IMR-90 (cell line): ENCODE measurements at regions of chr4 and their contacts with region 1.

Region 1: GRCh38 chr4:123661080-123661737 is 264.6 kb downstream of the SPRY1 start:
- DNase-seq: peak; percentile 33
- ATAC-seq: peak; percentile 48; the same call in 1 of the 2 replicates
- H3K4me3 ChIP-seq: no peak overlapping the region
- H3K27ac ChIP-seq: no peak overlapping the region
- H3K4me1 ChIP-seq: no peaks in the 10 kb centered on the region
- H3K27me3 ChIP-seq: no peaks in the 10 kb centered on the region
- CTCF ChIP-seq: peak; percentile 64
- POLR2A ChIP-seq: no peak
- RAD21 ChIP-seq: peak; percentile 69

Region 2: DNA sequence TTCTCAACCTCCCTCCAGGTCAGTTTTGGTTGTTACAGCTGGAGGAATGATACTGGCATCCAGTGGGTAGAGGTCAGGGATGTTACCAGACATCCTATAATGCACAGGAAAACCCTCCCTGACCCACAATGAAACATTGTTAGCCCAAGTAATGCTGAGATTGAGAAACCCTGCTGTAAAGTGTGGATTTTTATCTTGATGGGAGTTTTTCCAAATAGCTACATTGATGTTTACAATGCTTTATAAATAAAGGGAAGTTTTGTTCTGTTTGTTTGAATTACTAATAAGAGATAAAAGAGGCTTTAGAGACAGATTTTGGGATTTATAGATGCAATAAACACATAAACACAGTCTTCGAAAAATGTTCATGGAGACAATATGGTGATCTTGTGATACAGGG is 544.8 kb before region 1 on chr4:
- CTCF ChIA-PET with region 1: no interaction called
- POLR2A ChIA-PET with region 1: no interaction called
- dilution Hi-C with region 1: no loop called
- in situ Hi-C with region 1: loop called (anchors 10 kb)
- intact Hi-C with region 1: no loop called
- DNase-seq: peak; percentile 47
- ATAC-seq: peak; percentile 30
- H3K4me3 ChIP-seq: no peak overlapping the region
- H3K27ac ChIP-seq: no peak overlapping the region
- H3K4me1 ChIP-seq: peaks cover 7% of the 10 kb centered on the region
- H3K27me3 ChIP-seq: no peaks in the 10 kb centered on the region
- CTCF ChIP-seq: no peak
- POLR2A ChIP-seq: no peak
- RAD21 ChIP-seq: no peak

Region 3: GRCh38 chr4:123127218-123127617 is 534.0 kb before region 1 on chr4:
- CTCF ChIA-PET with region 1: interaction called, 8 read pairs
- POLR2A ChIA-PET with region 1: no interaction called
- dilution Hi-C with region 1: no loop called
- in situ Hi-C with region 1: no loop called
- intact Hi-C with region 1: loop called (anchors 2 kb)
- DNase-seq: peak; percentile 42
- ATAC-seq: peak; percentile 83
- H3K4me3 ChIP-seq: no peak overlapping the region
- H3K27ac ChIP-seq: no peak overlapping the region
- H3K4me1 ChIP-seq: no peaks in the 10 kb centered on the region
- H3K27me3 ChIP-seq: no peaks in the 10 kb centered on the region
- CTCF ChIP-seq: peak; percentile 56
- POLR2A ChIP-seq: no peak
- RAD21 ChIP-seq: peak; percentile 61

Region 4: DNA sequence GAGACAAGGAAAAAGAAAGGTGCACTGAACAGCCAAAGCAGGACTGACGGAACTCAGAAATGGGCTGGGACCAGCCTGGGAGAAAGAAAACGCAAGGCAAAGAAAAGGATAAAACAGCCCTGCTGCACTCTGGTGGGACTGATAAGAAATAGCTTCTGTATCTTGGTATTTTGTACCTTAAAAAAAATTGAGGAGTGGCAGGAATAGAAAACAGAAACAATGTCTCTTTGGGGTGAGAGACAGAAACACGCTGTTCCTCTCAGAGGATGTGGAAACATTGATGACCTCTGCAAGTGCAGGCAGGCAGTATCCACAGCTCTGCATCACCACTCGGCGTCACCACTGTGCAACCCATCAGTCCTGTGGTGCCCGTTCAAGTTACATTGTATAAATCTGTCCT is 417.1 kb before region 1 on chr4:
- CTCF ChIA-PET with region 1: no interaction called
- POLR2A ChIA-PET with region 1: no interaction called
- dilution Hi-C with region 1: no loop called
- in situ Hi-C with region 1: no loop called
- intact Hi-C with region 1: loop called (anchors 10 kb)
- DNase-seq: peak; percentile 65
- ATAC-seq: peak; percentile 93
- H3K4me3 ChIP-seq: no peak overlapping the region
- H3K27ac ChIP-seq: no peak overlapping the region
- H3K4me1 ChIP-seq: no peaks in the 10 kb centered on the region; the same call in 1 of the 2 replicates
- H3K27me3 ChIP-seq: no peaks in the 10 kb centered on the region
- CTCF ChIP-seq: peak; percentile 18; the same call in 1 of the 2 replicates
- POLR2A ChIP-seq: no peak
- RAD21 ChIP-seq: no peak

Region 5: DNA sequence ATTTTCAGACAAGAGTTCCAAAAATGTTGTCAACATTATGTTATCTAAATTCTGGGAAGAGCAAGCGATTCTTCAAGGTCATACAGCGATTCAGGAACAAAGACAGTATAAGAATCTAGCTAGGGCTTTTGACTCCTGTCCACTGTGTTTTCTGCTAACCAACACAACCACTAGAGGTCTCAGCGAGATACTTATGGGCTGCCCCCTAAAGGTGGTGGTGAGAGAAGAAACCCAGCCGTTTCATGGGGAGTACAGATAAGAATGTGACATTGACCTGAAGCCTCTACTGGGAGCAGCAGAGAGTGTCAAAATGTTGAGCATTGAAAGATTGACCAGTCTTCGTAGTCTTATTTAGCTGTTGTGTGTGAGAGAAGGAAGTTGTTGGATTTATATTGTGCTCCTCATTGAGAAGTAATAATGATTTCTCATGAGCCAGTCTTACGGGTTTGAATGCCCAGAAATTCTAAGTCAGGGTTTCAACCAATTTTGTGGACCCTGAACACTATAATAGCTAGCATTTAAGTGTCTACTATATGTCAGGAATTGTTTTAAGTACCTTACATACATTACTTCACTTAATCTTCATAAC is 96.4 kb before region 1 on chr4:
- CTCF ChIA-PET with region 1: no interaction called
- POLR2A ChIA-PET with region 1: no interaction called
- dilution Hi-C with region 1: no loop called
- in situ Hi-C with region 1: no loop called
- intact Hi-C with region 1: loop called (anchors 5 kb)
- DNase-seq: peak; percentile 69
- ATAC-seq: peak; percentile 77; the same call in 1 of the 2 replicates
- H3K4me3 ChIP-seq: no peak overlapping the region
- H3K27ac ChIP-seq: no peak overlapping the region
- H3K4me1 ChIP-seq: peaks cover 10% of the 10 kb centered on the region
- H3K27me3 ChIP-seq: no peaks in the 10 kb centered on the region
- CTCF ChIP-seq: peak; percentile 95
- POLR2A ChIP-seq: no peak
- RAD21 ChIP-seq: peak; percentile 68

Region 6: DNA sequence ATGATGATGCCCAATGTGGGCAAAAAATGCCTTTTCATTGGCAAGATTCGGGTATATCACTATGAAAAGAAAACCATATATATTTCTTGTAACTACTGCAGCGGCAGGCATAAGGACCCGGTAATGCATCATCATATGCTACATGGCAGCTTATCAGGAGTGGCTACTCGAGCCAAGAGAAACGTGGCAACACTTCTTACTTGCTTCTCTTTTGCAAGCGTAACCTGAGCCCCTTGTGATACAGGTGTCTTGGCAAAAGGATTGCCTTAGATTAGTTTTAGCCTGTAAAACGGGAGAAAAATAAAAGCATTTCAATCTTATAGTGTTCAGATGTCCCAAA is 15.7 kb after region 1 on chr4:
- CTCF ChIA-PET with region 1: no interaction called
- POLR2A ChIA-PET with region 1: no interaction called
- dilution Hi-C with region 1: no loop called
- in situ Hi-C with region 1: no loop called
- intact Hi-C with region 1: no loop called
- DNase-seq: no peak
- ATAC-seq: no peak
- H3K4me3 ChIP-seq: no peak overlapping the region
- H3K27ac ChIP-seq: no peak overlapping the region
- H3K4me1 ChIP-seq: peaks cover 4% of the 10 kb centered on the region; the same call in 1 of the 2 replicates
- H3K27me3 ChIP-seq: no peaks in the 10 kb centered on the region
- CTCF ChIP-seq: no peak
- POLR2A ChIP-seq: no peak
- RAD21 ChIP-seq: no peak

Region 7: DNA sequence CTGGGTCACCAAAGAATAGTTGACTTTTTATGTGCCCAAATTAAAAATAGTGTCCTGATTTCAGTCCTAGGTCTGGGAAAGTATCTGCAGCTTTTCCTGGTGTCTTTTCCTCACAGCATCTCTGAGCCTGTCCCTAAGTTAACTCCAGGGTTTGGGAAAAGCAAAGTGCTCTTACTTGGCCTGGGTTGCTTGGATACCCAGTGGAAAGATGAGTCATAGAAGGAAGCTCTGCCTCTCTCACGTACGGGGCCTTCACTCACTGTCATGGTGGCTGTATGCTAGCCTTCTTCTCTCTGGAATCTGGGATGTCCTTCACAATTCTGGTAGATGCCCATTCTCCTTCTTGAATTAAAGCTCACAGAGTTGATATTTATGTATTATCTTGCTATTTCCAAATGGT is 444.0 kb after region 1 on chr4:
- CTCF ChIA-PET with region 1: no interaction called
- POLR2A ChIA-PET with region 1: no interaction called
- dilution Hi-C with region 1: no loop called
- in situ Hi-C with region 1: loop called (anchors 10 kb)
- intact Hi-C with region 1: loop called (anchors 2 kb)
- DNase-seq: peak; percentile 22
- ATAC-seq: 0 out of 2 replicates have a peak, but pooled peaks have one; percentile 21
- H3K4me3 ChIP-seq: no peak overlapping the region
- H3K27ac ChIP-seq: no peak overlapping the region
- H3K4me1 ChIP-seq: no peaks in the 10 kb centered on the region
- H3K27me3 ChIP-seq: no peaks in the 10 kb centered on the region
- CTCF ChIP-seq: no peak
- POLR2A ChIP-seq: no peak
- RAD21 ChIP-seq: no peak

Region 8: GRCh38 chr4:124262211-124263179 is 601.3 kb after region 1 on chr4:
- CTCF ChIA-PET with region 1: no interaction called
- POLR2A ChIA-PET with region 1: no interaction called
- dilution Hi-C with region 1: no loop called
- in situ Hi-C with region 1: loop called (anchors 10 kb)
- intact Hi-C with region 1: loop called (anchors 5 kb)
- DNase-seq: peak; percentile 88
- ATAC-seq: peak; percentile 97
- H3K4me3 ChIP-seq: no peak overlapping the region
- H3K27ac ChIP-seq: no peak overlapping the region
- H3K4me1 ChIP-seq: no peaks in the 10 kb centered on the region
- H3K27me3 ChIP-seq: no peaks in the 10 kb centered on the region
- CTCF ChIP-seq: peak; percentile 91
- POLR2A ChIP-seq: no peak
- RAD21 ChIP-seq: peak; percentile 96